ENCODE measurements at regions of chr1 and their contacts with region 1.

Region 1: DNA sequence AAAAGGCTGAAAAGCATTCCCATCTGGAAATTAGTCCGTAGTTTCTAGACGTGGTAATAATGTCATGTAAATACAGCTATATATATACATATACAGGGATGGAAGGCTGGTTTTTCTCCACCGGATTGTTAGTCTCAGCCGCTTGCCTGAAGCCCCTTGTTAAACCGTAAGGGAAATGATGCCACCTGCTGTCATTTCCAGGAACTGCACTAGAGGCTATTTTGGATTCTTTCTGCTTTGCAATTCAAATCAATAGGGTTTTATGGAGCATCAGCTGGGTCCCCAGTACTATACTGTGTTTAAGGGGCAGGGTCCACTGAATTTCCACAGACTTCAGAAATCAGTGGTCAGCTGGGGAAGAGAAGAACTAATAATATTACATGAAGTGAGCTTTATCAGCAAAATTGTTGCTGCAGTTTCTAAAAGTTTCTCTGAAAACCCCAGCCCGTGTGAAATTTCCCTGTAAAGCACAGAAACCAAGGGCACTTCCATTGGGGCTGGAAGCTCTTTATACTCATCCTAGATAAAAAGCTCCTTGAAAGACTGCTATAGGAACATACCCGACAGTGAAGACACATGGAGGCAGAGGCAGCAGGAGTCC is 33.8 kb upstream of the MPZL1 start:
- DNase-seq: peak; percentile 51
- H3K4me3 ChIP-seq: no peak overlapping the region
- CTCF ChIP-seq: peak; percentile 80

Region 2: GRCh38 chr1:167553136-167554027 is 134.6 kb before region 1 on chr1 and contains the start of gene CREG1:
- CTCF ChIA-PET with region 1: interaction called, 32 read pairs
- POLR2A ChIA-PET with region 1: no interaction called
- DNase-seq: no peak
- H3K4me3 ChIP-seq: peak within 1 kb of the TSS; percentile 59
- CTCF ChIP-seq: no peak

Region 3: DNA sequence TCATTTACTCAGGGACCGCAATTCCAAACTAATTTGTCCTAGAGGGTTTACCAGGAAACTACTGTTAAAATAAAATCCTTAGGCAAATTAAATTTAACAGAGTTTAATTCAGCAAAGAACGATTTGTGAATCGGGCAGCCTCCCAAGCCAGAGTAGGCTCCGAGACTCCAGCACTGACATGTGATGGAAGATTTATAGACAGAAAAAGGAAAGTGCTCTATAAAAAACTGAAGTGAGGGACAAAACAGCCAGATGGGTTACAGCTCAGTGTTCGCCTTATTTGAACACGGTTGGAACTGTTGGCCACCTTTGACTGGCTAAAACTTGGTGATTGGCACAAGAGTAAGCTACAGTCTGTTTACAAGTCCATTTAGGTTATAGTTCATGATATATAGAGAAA is 93.2 kb before region 1 on chr1:
- CTCF ChIA-PET with region 1: interaction called, 250 read pairs
- POLR2A ChIA-PET with region 1: no interaction called
- DNase-seq: no peak
- H3K4me3 ChIP-seq: no peak overlapping the region
- CTCF ChIP-seq: no peak

Region 4: GRCh38 chr1:167631936-167632614 is 55.9 kb before region 1 on chr1:
- CTCF ChIA-PET with region 1: interaction called, 22 read pairs
- POLR2A ChIA-PET with region 1: no interaction called
- DNase-seq: no peak
- H3K4me3 ChIP-seq: no peak overlapping the region
- CTCF ChIP-seq: no peak

Region 5: GRCh38 chr1:167669209-167670124 is 18.6 kb before region 1 on chr1:
- CTCF ChIA-PET with region 1: interaction called, 60 read pairs
- POLR2A ChIA-PET with region 1: no interaction called
- DNase-seq: no peak
- H3K4me3 ChIP-seq: no peak overlapping the region
- CTCF ChIP-seq: no peak

Region 6: GRCh38 chr1:167708940-167709389 is 20.9 kb after region 1 on chr1:
- CTCF ChIA-PET with region 1: interaction called, 18 read pairs
- POLR2A ChIA-PET with region 1: no interaction called
- DNase-seq: no peak
- H3K4me3 ChIP-seq: no peak overlapping the region
- CTCF ChIP-seq: no peak

Measured in AG04449 (cell line).